ENCODE measurements at regions of chr1 and their contacts with region 1.

Region 1: GRCh38 chr1:186819126-186819525 is 9.6 kb upstream of the PLA2G4A start:
- DNase-seq: no peak
- CTCF ChIP-seq: no peak

Region 2: GRCh38 chr1:186806477-186806876 is 12.6 kb before region 1 on chr1:
- CTCF ChIA-PET with region 1: interaction called, 18 read pairs
- POLR2A ChIA-PET with region 1: no interaction called
- DNase-seq: no peak
- CTCF ChIP-seq: peak; percentile 41

Measured in GM10248 (cell line).